Cardiac septum (tissue), 1 donor: ENCODE measurements at regions of chr11 and their contacts with region 1.

Region 1: GRCh38 chr11:73335204-73335923 is 27.3 kb downstream of the ARHGEF17 start:
- DNase-seq: peak; percentile 92

Region 2: DNA sequence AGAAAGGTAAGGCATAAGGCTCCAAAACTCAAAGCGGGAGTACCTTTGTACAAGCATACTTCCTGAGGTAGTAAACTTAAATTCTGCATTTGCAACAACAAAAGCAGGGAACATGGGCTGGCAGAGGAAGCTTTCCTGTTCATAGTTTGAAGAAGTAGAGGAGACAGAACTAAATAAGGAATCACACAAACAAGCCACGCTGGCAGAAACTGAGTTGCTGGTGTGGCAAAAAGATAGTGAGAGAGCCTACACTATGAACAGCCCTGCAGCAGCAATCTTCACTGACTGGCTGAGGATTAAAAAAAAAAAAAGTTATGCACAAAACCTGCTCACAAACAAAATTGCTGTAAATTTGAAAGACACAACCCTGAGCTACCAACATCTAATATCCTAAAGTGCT is 239.8 kb before region 1 on chr11:
- intact Hi-C with region 1: no loop called
- DNase-seq: no peak

Region 3: DNA sequence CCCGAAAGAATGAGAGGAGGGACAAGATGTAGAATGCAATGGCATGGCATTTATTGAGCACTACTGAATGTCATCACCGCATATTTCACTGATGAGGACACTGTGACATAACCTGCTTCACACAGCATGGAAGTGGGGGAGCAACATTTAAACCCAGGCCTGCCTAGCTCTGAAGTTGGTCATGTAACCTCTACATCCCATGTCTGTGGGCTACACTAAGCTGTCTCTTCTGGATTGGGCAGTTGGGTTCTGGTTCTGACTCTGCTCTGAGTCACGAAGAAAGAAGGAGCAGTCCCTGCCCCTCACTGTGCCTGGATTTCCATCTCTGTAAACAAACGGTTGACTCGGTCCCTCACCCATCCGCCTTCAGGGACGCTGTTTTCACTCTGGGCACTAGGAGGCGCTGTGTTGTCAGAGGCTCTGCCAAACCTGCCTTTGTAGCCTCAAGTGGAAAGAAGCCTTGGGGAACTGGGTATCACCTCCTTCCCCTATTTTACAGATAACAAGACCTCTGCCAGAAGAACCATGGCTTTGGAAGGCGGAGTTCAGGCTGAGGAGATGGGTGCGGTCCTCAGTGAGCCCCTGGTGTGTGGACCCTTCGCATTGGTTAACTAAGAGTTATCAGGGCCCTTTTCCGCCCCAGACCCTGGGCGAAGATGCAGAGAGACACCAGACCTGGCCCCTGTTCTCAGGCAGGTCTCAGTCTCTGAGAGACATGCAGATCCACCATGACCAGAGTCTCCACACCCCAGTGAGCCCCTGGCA is 40.0 kb before region 1 on chr11:
- intact Hi-C with region 1: loop called (anchors 5 kb)
- DNase-seq: peak; percentile 88

Region 4: DNA sequence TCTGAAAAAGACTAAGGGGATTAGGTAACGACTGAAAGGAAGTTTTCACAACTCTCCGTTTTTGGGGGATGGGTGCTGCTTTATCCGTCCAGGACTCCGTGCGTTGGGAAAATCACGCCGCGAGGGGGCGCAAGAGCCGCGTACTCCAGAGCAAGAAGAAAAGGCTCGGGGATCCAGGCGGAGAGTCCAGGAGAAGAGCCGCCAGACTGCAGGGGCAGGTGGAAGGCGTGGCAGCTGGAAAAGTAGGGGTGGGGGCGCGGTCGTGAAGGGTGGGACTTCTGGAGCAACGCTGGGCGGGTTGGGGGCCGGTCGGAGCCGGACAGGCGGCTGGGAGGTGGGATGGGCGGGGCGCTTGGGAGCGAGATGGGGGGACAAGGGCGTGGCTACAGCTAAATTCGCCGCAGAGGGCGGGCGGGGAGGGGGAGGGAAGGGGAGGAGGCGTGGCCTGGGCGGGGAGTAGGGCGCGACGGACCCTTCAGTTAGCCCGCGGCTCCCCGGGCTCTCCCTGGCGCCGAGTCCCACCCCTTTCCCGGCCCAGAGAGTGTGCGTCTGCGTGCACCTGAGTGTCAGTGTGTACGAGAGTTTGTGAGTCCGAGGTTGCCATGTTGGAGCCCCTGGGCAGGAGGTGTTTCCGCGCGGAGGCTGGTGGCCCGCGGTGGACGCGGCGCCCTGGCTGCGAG is 27.9 kb before region 1 on chr11:
- intact Hi-C with region 1: loop called (anchors 1 kb)
- DNase-seq: peak; percentile 98